ENCODE measurements at regions of chr10 and their contacts with region 1.

Region 1: DNA sequence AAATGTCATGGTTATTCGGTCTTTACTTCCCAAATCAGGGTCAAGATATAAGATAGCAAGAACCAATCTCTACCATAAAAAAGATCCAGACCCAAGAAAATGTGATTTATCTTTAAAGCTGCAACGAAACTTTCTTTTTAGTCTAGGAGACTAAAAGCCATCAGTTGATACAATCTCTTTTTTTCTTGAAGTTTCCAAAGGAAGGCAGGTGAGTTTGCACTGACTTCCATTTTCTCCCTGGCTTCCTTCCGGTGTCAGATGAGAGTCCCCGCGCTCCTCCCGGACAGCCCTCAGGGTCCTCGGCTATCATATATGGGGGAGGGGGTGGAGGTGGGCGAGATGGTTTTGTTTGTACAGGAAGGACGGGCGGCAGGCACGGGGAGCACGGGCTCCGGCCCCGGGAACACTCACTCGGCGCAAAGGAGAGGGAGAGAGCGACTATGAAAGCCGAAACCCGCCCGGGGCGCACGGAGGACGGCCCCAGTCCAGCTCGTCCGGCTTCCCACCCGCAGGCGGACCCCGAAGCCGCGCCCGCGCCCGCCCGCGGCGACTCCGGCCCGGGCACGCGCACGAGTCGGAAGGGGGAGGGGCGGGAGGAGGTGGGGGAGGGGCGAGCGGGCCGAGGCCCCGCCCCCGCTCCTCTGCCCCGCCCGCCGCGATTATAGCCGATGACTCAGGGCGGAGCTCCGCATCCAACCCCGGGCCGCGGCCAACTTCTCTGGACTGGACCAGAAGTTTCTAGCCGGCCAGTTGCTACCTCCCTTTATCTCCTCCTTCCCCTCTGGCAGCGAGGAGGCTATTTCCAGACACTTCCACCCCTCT is at the start of gene BAG3:
- DNase-seq: peak; percentile 57 to 88 (median 76)
- ATAC-seq: peak; percentile 76
- H3K4me3 ChIP-seq: peak within 1 kb of the TSS; percentile 94 to 95
- H3K4me3 Mint-ChIP-seq: peak within 1 kb of the TSS; percentile 98
- H3K27ac ChIP-seq: peak within 1 kb of the TSS; percentile 78 to 88
- H3K27ac Mint-ChIP-seq: peak within 1 kb of the TSS; percentile 95
- H3K4me1 ChIP-seq: peaks cover 36% of the 10 kb centered on the region
- H3K4me1 Mint-ChIP-seq: peaks cover 44% of the 10 kb centered on the region
- H3K27me3 ChIP-seq: no peaks in the 10 kb centered on the region
- H3K27me3 Mint-ChIP-seq: no peaks in the 10 kb centered on the region
- CTCF ChIP-seq: no peak
- total RNA-seq, gene BAG3: 20.6 to 21.8 TPM

Region 2: DNA sequence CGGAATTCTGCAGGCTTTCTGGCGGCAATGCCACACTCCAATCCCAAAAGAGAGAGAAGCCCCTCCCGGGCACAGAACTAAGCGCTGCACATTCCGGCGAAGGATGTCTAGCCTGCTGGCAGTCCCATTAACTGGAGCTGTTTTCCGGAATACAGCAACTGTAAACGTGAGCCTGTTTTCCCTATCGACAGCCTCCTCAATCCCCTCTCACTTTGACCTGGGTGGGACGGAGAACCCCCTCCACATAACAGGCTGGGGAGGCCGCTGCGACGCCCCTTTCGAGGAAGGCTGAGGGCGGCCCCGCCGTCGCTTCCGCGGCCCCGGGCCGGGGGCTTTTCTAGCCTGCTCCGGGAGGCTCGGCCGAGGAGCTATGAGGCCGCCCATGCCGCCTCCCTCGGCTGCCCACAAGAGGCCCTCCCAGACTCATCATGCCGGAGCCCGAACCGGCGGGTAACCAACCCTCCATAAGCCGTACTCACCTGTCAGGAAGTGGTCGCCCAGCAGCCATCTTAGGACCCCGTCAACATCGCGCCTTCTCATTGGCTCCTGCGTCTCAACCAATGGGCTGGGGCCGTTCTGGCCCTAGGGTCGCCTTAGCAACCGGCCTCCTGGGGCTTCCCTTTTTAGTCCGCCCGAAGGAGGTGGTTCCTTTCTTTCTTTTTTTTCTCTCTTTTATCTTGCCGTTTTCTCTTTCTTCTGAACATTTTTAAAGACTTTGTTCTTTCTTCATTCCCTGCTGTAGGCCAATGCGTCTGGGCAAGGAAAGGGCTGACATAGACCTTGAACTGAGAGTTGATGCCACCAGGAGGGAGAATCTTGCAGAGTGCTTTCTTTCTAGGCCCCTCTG is 1308.9 kb before region 1 on chr10 and contains the start of gene FAM204A:
- CTCF ChIA-PET with region 1: no interaction called
- POLR2A ChIA-PET with region 1: no interaction called
- intact Hi-C with region 1: loop called in 1 of 2 experiments (anchors 10 kb)
- DNase-seq: peak; percentile 95 to 99 (median 97)
- ATAC-seq: peak; percentile 94
- H3K4me3 ChIP-seq: peak within 1 kb of the TSS; percentile 81 to 86
- H3K4me3 Mint-ChIP-seq: peak within 1 kb of the TSS; percentile 96
- H3K27ac ChIP-seq: peak within 1 kb of the TSS; percentile 51 to 72
- H3K27ac Mint-ChIP-seq: peak within 1 kb of the TSS; percentile 95
- H3K4me1 ChIP-seq: peaks cover 22% of the 10 kb centered on the region
- H3K4me1 Mint-ChIP-seq: peaks cover 53% of the 10 kb centered on the region
- H3K27me3 ChIP-seq: no peaks in the 10 kb centered on the region
- H3K27me3 Mint-ChIP-seq: no peaks in the 10 kb centered on the region
- CTCF ChIP-seq: no peak
- total RNA-seq, gene FAM204A: 44.8 to 51.7 TPM

Region 3: GRCh38 chr10:119165171-119166110 is 485.5 kb before region 1 on chr10 and contains the start of gene SFXN4:
- CTCF ChIA-PET with region 1: no interaction called
- POLR2A ChIA-PET with region 1: no interaction called
- intact Hi-C with region 1: loop called (anchors 1 to 5 kb)
- DNase-seq: peak; percentile 59 to 89 (median 77)
- ATAC-seq: peak; percentile 93
- H3K4me3 ChIP-seq: peak within 1 kb of the TSS; percentile 49 to 80
- H3K4me3 Mint-ChIP-seq: peak within 1 kb of the TSS; percentile 95
- H3K27ac ChIP-seq: peak within 1 kb of the TSS; percentile 61 to 71
- H3K27ac Mint-ChIP-seq: peak within 1 kb of the TSS; percentile 96
- H3K4me1 ChIP-seq: peaks cover 18% of the 10 kb centered on the region
- H3K4me1 Mint-ChIP-seq: peaks cover 34% of the 10 kb centered on the region
- H3K27me3 ChIP-seq: no peaks in the 10 kb centered on the region
- H3K27me3 Mint-ChIP-seq: no peaks in the 10 kb centered on the region
- CTCF ChIP-seq: no peak
- total RNA-seq, gene SFXN4: 10.5 to 10.8 TPM

Region 4: DNA sequence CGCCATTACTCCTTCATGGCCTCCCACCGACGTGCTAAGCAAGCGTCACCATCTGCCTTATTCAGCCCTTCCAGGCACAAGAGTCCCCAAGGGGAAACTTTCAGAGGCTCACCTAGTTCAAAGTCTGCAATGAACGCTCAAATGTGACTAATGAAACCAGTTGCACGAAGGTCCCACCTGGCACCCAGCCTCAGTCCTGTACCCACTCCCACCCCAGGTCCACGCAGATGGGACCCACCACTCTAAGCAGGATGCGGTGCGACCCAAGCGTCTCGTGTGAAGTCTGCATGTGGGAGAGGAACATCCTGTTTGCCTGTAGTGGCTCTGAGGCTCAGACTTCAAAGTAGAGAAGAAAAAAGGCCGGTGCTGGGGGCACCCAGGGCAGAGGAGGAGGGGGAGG is 148.7 kb before region 1 on chr10:
- CTCF ChIA-PET with region 1: no interaction called
- POLR2A ChIA-PET with region 1: no interaction called
- intact Hi-C with region 1: loop called in 1 of 2 experiments (anchors 2 kb)
- DNase-seq: peak; percentile 64 to 97 (median 88)
- ATAC-seq: peak; percentile 82
- H3K4me3 ChIP-seq: peak overlapping the region; percentile 0 to 18
- H3K4me3 Mint-ChIP-seq: peak overlapping the region; percentile 79
- H3K27ac ChIP-seq: peak overlapping the region; percentile 73 to 77
- H3K27ac Mint-ChIP-seq: peak overlapping the region; percentile 99
- H3K4me1 ChIP-seq: peaks cover 94% of the 10 kb centered on the region
- H3K4me1 Mint-ChIP-seq: peaks cover 91% of the 10 kb centered on the region
- H3K27me3 ChIP-seq: no peaks in the 10 kb centered on the region
- H3K27me3 Mint-ChIP-seq: no peaks in the 10 kb centered on the region
- CTCF ChIP-seq: no peak